Calu3 (cell line): ENCODE measurements at regions of chr7 and their contacts with region 1.

Region 1: GRCh38 chr7:28685644-28686417 is 272.3 kb downstream of the TRIL start:
- DNase-seq: peak; percentile 91
- H3K4me3 Mint-ChIP-seq: no peak overlapping the region
- H3K27ac Mint-ChIP-seq: no peak overlapping the region
- H3K4me1 Mint-ChIP-seq: peaks cover 15% of the 10 kb centered on the region
- H3K27me3 Mint-ChIP-seq: no peaks in the 10 kb centered on the region
- CTCF ChIP-seq: no peak

Region 2: GRCh38 chr7:28558236-28558635 is 127.6 kb before region 1 on chr7:
- CTCF ChIA-PET with region 1: no interaction called
- intact Hi-C with region 1: loop called (anchors 1 kb)
- DNase-seq: peak; percentile 63
- H3K4me3 Mint-ChIP-seq: no peak overlapping the region
- H3K27ac Mint-ChIP-seq: peak overlapping the region; percentile 40
- H3K4me1 Mint-ChIP-seq: peaks cover 61% of the 10 kb centered on the region
- H3K27me3 Mint-ChIP-seq: no peaks in the 10 kb centered on the region
- CTCF ChIP-seq: no peak